WTC11 (cell line): ENCODE measurements at regions of chr18 and their contacts with region 1.

Region 1: GRCh38 chr18:70454704-70455322 is 166.0 kb downstream of the SOCS6 start:
- DNase-seq: no peak
- ATAC-seq: peak; percentile 65
- H3K4me3 Mint-ChIP-seq: no peak overlapping the region
- H3K27ac Mint-ChIP-seq: no peak overlapping the region; the same call in 1 of the 2 replicates
- H3K4me1 Mint-ChIP-seq: peaks cover 42% of the 10 kb centered on the region
- H3K27me3 Mint-ChIP-seq: no peaks in the 10 kb centered on the region
- CTCF ChIP-seq: peak; percentile 79

Region 2: DNA sequence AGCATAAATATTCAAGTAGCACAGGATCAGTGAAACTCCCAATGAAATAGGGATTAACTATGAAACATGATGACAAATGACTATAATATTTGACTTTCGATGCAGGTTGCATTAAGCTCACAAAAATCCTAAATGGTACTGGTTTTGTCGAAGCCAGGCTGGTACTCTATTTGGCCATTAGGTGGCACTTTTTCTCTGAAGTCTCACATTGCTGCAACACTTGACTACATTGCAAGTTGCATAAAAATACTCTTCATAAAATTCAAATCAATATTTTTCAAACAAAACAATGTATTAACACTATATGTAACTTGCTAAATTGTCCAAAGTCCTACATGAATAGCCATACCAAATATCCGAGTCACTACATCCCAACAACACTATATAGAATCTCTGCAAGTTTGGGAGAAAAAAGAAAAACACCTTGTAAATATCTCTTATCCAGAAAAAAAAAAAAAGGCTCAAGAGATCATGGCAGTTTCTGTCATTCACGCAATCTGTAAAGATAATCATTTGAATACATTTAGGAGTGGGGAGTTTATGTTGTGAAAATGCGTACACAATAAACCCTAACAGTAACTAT is 258.9 kb before region 1 on chr18:
- CTCF ChIA-PET with region 1: interaction called, 13 read pairs
- POLR2A ChIA-PET with region 1: no interaction called
- DNase-seq: peak; percentile 10
- ATAC-seq: no peak
- H3K4me3 Mint-ChIP-seq: no peak overlapping the region
- H3K27ac Mint-ChIP-seq: no peak overlapping the region
- H3K4me1 Mint-ChIP-seq: no peaks in the 10 kb centered on the region
- H3K27me3 Mint-ChIP-seq: no peaks in the 10 kb centered on the region
- CTCF ChIP-seq: peak; percentile 24

Region 3: DNA sequence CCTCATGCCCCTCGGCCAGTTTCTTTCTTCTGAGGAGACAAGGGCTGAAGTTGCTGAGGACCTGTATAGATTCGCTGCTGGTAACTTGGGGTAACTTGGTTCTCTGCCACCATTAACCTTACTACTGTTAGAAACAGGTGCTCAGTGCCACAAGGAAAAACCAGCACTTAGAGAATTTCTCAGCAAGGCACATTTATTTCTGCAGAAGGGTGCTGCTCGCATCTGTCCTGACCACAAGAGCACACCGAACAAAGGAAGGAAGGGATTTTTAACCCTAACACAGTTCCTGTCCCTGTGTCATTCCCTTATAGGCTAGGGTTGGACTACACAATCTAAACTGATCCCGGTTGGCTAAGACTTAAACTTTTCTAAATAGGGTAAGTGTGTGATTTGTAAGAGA is 11.9 kb before region 1 on chr18:
- CTCF ChIA-PET with region 1: interaction called, 15 read pairs
- POLR2A ChIA-PET with region 1: no interaction called
- DNase-seq: no peak
- ATAC-seq: no peak
- H3K4me3 Mint-ChIP-seq: no peak overlapping the region
- H3K27ac Mint-ChIP-seq: no peak overlapping the region
- H3K4me1 Mint-ChIP-seq: peaks cover 9% of the 10 kb centered on the region
- H3K27me3 Mint-ChIP-seq: peaks cover 2% of the 10 kb centered on the region; the same call in 1 of the 2 replicates
- CTCF ChIP-seq: no peak

Region 4: GRCh38 chr18:70506511-70506910 is 51.7 kb after region 1 on chr18:
- CTCF ChIA-PET with region 1: no interaction called
- POLR2A ChIA-PET with region 1: no interaction called
- DNase-seq: no peak
- ATAC-seq: no peak
- H3K4me3 Mint-ChIP-seq: no peak overlapping the region
- H3K27ac Mint-ChIP-seq: no peak overlapping the region
- H3K4me1 Mint-ChIP-seq: no peaks in the 10 kb centered on the region
- H3K27me3 Mint-ChIP-seq: peaks cover 8% of the 10 kb centered on the region
- CTCF ChIP-seq: no peak